ENCODE measurements at regions of chr6 and their contacts with region 1.

Region 1: GRCh38 chr6:26156076-26156849 is 69.0 kb downstream of the HFE start:
- DNase-seq: peak; percentile 88 to 96
- H3K4me3 ChIP-seq: peak overlapping the region; percentile 68
- H3K27ac ChIP-seq: peak overlapping the region; percentile 85 to 99
- H3K4me1 ChIP-seq: peaks cover 0 to 19% (median 9%) of the 10 kb centered on the region in 4 donors
- H3K27me3 ChIP-seq: no peaks in the 10 kb centered on the region
- CTCF ChIP-seq: no peak

Region 2: GRCh38 chr6:26103770-26104456 is 52.4 kb before region 1 on chr6:
- intact Hi-C with region 1: loop called (anchors 10 kb)
- DNase-seq: peak; percentile 87 to 94
- H3K4me3 ChIP-seq: peak overlapping the region; percentile 56 to 70
- H3K27ac ChIP-seq: peak overlapping the region; percentile 82 to 86
- H3K4me1 ChIP-seq: peaks cover 0 to 12% (median 2%) of the 10 kb centered on the region in 4 donors
- H3K27me3 ChIP-seq: no peaks in the 10 kb centered on the region
- CTCF ChIP-seq: peak; percentile 38 to 40

Region 3: GRCh38 chr6:26122793-26123674 is 33.2 kb before region 1 on chr6:
- intact Hi-C with region 1: loop called (anchors 1 kb)
- DNase-seq: peak; percentile 97
- H3K4me3 ChIP-seq: peak overlapping the region; percentile 94 to 95
- H3K27ac ChIP-seq: peak overlapping the region; percentile 98
- H3K4me1 ChIP-seq: peaks cover 0 to 20% (median 10%) of the 10 kb centered on the region in 4 donors
- H3K27me3 ChIP-seq: no peaks in the 10 kb centered on the region
- CTCF ChIP-seq: no peak

Region 4: DNA sequence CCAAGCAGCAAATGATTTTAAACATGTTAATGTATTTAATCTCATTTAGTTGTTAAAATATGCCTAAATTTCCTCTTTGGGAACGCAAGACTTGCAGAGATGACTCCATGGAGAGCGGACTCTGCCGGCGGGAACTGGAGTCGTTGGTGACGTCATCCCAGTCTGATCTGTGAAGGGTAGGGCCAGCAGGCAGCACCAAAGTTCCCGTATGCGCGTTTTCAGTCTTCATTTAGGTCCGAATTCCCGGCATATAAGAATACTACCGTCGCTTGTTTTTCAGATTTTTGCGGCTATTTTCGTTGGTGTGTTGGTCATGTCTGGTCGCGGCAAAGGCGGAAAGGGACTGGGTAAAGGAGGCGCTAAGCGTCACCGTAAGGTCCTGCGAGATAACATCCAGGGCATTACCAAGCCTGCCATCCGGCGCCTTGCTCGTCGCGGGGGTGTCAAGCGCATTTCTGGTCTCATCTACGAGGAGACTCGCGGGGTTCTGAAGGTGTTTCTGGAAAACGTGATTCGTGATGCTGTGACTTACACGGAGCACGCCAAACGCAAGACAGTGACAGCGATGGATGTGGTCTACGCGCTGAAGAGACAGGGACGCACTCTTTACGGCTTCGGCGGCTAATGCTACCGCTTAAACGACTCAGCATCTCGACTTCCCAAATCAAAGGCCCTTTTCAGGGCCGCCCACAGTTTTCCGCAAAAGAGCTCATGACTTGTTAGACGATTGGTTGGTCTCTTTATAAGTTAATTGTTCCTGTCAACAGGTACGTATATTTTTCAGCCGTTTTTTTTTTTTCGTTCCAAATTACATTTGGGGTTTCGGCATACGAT is 48.3 kb after region 1 on chr6:
- intact Hi-C with region 1: loop called (anchors 2 kb)
- DNase-seq: peak; percentile 93 to 96
- H3K4me3 ChIP-seq: peak overlapping the region; percentile 68 to 78
- H3K27ac ChIP-seq: peak overlapping the region; percentile 90 to 96
- H3K4me1 ChIP-seq: peaks cover 0 to 25% (median 3%) of the 10 kb centered on the region in 4 donors
- H3K27me3 ChIP-seq: no peaks in the 10 kb centered on the region
- CTCF ChIP-seq: peak in 1 of 2 experiments; percentile 18

Region 5: GRCh38 chr6:26537846-26538571 is 381.7 kb after region 1 on chr6 and contains the start of gene HMGN4:
- intact Hi-C with region 1: no loop called
- DNase-seq: peak; percentile 78 to 89
- H3K4me3 ChIP-seq: peak within 1 kb of the TSS; percentile 75 to 86
- H3K27ac ChIP-seq: peak within 1 kb of the TSS; percentile 94 to 95
- H3K4me1 ChIP-seq: peaks cover 0 to 57% (median 25%) of the 10 kb centered on the region in 4 donors
- H3K27me3 ChIP-seq: no peaks in the 10 kb centered on the region
- CTCF ChIP-seq: no peak

Measured in tibial artery (tissue), 4 donors.